ENCODE measurements at regions of chr14 and their contacts with region 1.

Region 1: DNA sequence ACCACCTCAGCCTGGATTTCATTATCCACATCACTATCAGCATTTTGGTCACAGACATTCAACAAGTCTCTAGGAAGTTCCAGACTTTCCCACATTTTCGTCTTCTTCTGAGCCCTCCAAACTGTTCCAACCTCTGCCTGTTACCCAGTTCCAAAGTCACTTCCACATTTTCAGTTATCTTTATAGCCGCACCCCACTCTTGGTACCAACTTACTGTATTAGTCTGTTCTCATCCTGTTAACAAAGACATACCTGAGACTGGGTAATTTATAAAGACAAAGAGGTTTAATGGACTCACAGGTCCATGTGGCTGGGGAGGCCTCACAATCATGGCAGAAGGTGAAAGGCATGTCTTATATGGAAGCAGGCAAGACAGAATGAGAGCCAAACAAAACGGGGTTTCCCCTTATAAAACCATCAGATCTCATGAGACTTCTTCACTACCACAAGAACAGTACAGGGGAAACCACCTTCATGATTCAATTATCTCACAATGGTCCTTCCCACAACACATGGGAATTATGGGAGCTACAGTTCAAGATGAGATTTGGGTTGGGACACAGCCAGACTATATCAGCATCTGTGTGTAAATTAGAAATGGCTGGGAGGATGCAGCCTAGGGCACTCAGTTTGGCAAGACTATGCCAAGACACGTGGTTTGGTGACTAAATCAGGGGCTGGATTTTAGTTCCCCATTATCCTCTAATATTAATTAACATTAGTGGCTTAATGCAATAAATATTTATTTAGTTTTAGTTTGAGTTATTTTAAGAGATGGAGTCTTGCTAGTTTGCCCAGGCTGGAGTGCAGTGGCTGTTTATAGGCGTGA is 16.2 kb upstream of the FUT8 start:
- DNase-seq: no peak
- ATAC-seq: peak; percentile 79
- H3K4me3 Mint-ChIP-seq: peak overlapping the region; percentile 58
- H3K27ac Mint-ChIP-seq: peak overlapping the region; percentile 82
- H3K4me1 Mint-ChIP-seq: peaks cover 32% of the 10 kb centered on the region
- H3K27me3 Mint-ChIP-seq: no peaks in the 10 kb centered on the region
- CTCF ChIP-seq: no peak

Region 2: DNA sequence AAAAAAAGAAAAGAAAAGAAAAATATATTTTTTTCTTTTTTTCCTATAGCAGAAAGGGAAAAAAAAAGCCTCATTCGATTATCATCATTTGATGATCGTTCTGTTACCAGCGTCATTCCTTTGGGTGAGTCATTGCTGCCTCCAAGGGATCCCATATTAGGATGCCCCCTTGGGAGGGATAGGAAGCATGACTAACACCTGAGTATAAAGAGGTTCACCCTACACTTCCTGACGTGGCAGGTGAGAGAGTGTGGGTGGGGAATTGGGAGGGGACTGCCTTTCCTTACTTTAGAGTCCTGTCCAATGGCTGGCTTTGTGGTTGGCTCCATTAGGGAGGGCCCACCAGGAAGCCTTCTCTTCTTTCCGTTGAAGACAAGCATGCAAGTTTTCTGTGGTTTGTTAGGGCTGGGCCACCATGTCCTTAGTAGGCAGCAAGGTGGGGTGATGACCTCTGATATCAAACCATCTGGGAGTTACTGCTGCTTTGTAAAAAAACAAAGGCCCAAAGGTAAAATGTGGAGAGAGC is 39.9 kb before region 1 on chr14:
- CTCF ChIA-PET with region 1: no interaction called
- POLR2A ChIA-PET with region 1: interaction called, 4 read pairs
- intact Hi-C with region 1: loop called (anchors 1 kb)
- DNase-seq: no peak
- ATAC-seq: no peak
- H3K4me3 Mint-ChIP-seq: no peak overlapping the region
- H3K27ac Mint-ChIP-seq: peak overlapping the region; percentile 71
- H3K4me1 Mint-ChIP-seq: peaks cover 87% of the 10 kb centered on the region
- H3K27me3 Mint-ChIP-seq: no peaks in the 10 kb centered on the region
- CTCF ChIP-seq: no peak

Region 3: GRCh38 chr14:65676361-65676998 is 280.2 kb after region 1 on chr14:
- CTCF ChIA-PET with region 1: no interaction called
- POLR2A ChIA-PET with region 1: no interaction called
- intact Hi-C with region 1: no loop called
- DNase-seq: no peak
- ATAC-seq: no peak
- H3K4me3 Mint-ChIP-seq: no peak overlapping the region
- H3K27ac Mint-ChIP-seq: no peak overlapping the region
- H3K4me1 Mint-ChIP-seq: peaks cover 7% of the 10 kb centered on the region
- H3K27me3 Mint-ChIP-seq: no peaks in the 10 kb centered on the region
- CTCF ChIP-seq: no peak

Measured in activated B cell treated with CpG ODN at 0.5 μM for 24 hours (primary cell).